ENCODE measurements at regions of chr4 and their contacts with region 1.

Region 1: DNA sequence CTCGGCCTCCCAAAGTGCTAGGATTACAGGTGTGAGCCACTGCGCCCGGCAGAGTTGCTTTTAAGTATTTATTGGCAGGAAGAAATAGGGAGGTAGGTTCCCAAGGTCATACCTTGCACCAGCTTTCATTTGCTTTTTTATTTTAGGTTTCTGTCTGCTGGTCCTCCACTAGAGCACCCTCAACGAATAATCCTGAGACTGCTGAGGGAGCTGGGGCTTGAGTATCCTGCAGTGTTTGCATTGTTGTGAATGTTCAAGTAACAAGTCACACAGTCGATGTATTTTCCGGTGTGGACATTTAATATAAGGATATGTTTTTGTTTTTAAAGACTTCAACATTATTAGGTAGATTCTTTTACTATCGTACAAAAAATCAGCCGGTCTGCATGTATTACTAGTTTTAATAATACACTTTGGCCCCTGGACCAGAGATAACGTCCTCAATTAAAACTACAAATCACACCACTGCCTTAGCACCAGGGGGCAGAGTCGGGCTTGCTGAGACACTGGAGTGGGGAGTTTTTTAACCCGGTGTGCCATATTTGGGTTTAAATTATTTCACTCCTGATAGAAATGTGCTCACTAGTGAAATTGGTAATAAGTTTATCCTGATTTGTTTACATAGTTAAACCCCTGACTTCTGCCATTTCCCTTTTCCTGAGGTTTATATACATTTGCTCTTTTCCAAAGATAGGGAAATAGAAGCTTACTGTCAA is 11.6 kb downstream of the SMIM20 start:
- DNase-seq: peak; percentile 25 to 59 (median 42)
- ATAC-seq: peak; percentile 92
- H3K4me3 ChIP-seq: no peak overlapping the region
- H3K27ac ChIP-seq: no peak overlapping the region
- H3K4me1 ChIP-seq: no peaks in the 10 kb centered on the region; a peak in 2 of 5 replicates
- H3K27me3 ChIP-seq: no peaks in the 10 kb centered on the region
- CTCF ChIP-seq: peak; percentile 56 to 65 (median 61)
- EP300 ChIP-seq: no peak
- POLR2A ChIP-seq: no peak
- RAD21 ChIP-seq: peak in 1 of 2 experiments; percentile 53; a peak in 3 of 4 replicates

Region 2: GRCh38 chr4:26028793-26029567 is 103.3 kb after region 1 on chr4:
- CTCF ChIA-PET with region 1: no interaction called
- POLR2A ChIA-PET with region 1: no interaction called
- in situ Hi-C with region 1: no loop called
- intact Hi-C with region 1: loop called (anchors 5 kb)
- DNase-seq: peak; percentile 37 to 58 (median 50)
- ATAC-seq: peak; percentile 99
- H3K4me3 ChIP-seq: no peak overlapping the region
- H3K27ac ChIP-seq: no peak overlapping the region
- H3K4me1 ChIP-seq: peaks cover 0 to 7% of the 10 kb centered on the region in 2 experiments; a peak in 2 of 5 replicates
- H3K27me3 ChIP-seq: peaks cover 10 to 28% of the 10 kb centered on the region in 2 experiments; a peak in 4 of 5 replicates
- CTCF ChIP-seq: peak; percentile 60 to 84 (median 65); a peak in 5 of 6 replicates
- EP300 ChIP-seq: no peak
- POLR2A ChIP-seq: no peak
- RAD21 ChIP-seq: peak; percentile 33 to 75; a peak in 3 of 4 replicates